Gastrocnemius medialis (tissue), 4 donors: ENCODE measurements at regions of chr17 and their contacts with region 1.

Region 1: GRCh38 chr17:42577532-42578281 is at the start of gene PSMC3IP:
- DNase-seq: peak; percentile 94
- ATAC-seq: peak; percentile 95 to 96
- H3K4me3 ChIP-seq: peak within 1 kb of the TSS; percentile 61 to 94 (median 86)
- H3K27ac ChIP-seq: peak within 1 kb of the TSS; percentile 83 to 98 (median 91)
- H3K4me1 ChIP-seq: peaks cover 12 to 18% of the 10 kb centered on the region in 2 donors
- H3K27me3 ChIP-seq: no peaks in the 10 kb centered on the region
- CTCF ChIP-seq: peak in 2 of 5 experiments; percentile 23 to 30
- POLR2A ChIP-seq: peak; percentile 62 to 65
- total RNA-seq, gene PSMC3IP: 0.46 to 2.7 (median 1.4) TPM

Region 2: DNA sequence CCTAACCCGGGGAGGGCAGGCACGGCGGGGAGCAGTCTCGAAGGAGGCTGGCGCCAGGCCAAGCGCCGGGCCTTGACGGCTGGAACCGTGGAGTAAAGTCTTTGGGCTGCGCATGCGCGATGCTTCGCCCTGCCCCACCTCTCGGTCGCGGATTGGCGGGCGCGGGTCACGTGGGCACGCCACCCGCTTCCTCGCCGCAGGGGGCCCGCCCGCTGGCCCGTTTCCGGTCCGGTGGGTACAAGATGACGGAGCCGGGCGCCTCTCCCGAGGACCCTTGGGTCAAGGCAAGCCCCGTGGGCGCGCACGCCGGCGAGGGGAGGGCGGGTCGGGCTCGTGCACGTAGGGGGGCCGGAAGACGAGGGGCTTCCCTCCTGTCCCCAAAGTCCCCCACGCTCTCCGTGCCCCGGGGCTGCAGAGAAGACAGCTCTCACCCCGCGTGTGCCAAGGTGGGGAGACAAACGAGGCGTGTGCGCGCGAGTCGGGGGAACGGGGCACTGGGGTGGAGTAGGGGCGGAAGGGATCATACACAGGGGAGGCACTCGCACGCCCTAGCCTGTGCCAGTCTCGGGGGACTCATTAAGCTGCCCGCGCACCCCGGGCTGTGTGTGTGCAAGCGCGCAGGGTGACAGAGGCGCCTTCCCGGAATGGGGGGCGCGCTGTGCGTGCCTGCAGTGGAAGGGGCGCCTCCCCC is 10.7 kb before region 1 on chr17 and contains the start of gene MLX:
- in situ Hi-C with region 1: no loop called
- intact Hi-C with region 1: loop called (anchors 1 kb)
- DNase-seq: peak; percentile 91 to 94
- ATAC-seq: peak; percentile 77 to 79
- H3K4me3 ChIP-seq: peak within 1 kb of the TSS; percentile 84 to 92 (median 86)
- H3K27ac ChIP-seq: peak within 1 kb of the TSS; percentile 91 to 97 (median 94)
- H3K4me1 ChIP-seq: peaks cover 27 to 37% of the 10 kb centered on the region in 2 donors
- H3K27me3 ChIP-seq: no peaks in the 10 kb centered on the region
- CTCF ChIP-seq: no peak
- POLR2A ChIP-seq: peak; percentile 34 to 71
- total RNA-seq, gene MLX: 49.7 to 81.9 (median 53.8) TPM

Region 3: GRCh38 chr17:42659079-42659931 is 81.6 kb after region 1 on chr17 and contains the start of gene TUBG2:
- in situ Hi-C with region 1: no loop called
- intact Hi-C with region 1: no loop called
- DNase-seq: peak; percentile 52 to 79
- ATAC-seq: peak; percentile 63 to 83
- H3K4me3 ChIP-seq: peak within 1 kb of the TSS; percentile 58 to 76 (median 72)
- H3K27ac ChIP-seq: peak within 1 kb of the TSS; percentile 62 to 72 (median 67)
- H3K4me1 ChIP-seq: peaks cover 7 to 12% of the 10 kb centered on the region in 2 donors
- H3K27me3 ChIP-seq: no peaks in the 10 kb centered on the region
- CTCF ChIP-seq: no peak
- POLR2A ChIP-seq: peak; percentile 37 to 38
- total RNA-seq, gene TUBG2: 3.9 to 5.2 (median 4.2) TPM

Region 4: GRCh38 chr17:42677008-42677857 is 99.5 kb after region 1 on chr17:
- in situ Hi-C with region 1: loop called (anchors 5 to 25 kb)
- intact Hi-C with region 1: loop called (anchors 1 kb)
- DNase-seq: peak; percentile 100
- ATAC-seq: peak; percentile 60 to 69
- H3K4me3 ChIP-seq: peak overlapping the region; percentile 76 to 99 (median 97)
- H3K27ac ChIP-seq: peak overlapping the region; percentile 93 to 100 (median 98)
- H3K4me1 ChIP-seq: peaks cover 59 to 68% of the 10 kb centered on the region in 2 donors
- H3K27me3 ChIP-seq: no peaks in the 10 kb centered on the region
- CTCF ChIP-seq: no peak
- POLR2A ChIP-seq: no peak

Region 5: DNA sequence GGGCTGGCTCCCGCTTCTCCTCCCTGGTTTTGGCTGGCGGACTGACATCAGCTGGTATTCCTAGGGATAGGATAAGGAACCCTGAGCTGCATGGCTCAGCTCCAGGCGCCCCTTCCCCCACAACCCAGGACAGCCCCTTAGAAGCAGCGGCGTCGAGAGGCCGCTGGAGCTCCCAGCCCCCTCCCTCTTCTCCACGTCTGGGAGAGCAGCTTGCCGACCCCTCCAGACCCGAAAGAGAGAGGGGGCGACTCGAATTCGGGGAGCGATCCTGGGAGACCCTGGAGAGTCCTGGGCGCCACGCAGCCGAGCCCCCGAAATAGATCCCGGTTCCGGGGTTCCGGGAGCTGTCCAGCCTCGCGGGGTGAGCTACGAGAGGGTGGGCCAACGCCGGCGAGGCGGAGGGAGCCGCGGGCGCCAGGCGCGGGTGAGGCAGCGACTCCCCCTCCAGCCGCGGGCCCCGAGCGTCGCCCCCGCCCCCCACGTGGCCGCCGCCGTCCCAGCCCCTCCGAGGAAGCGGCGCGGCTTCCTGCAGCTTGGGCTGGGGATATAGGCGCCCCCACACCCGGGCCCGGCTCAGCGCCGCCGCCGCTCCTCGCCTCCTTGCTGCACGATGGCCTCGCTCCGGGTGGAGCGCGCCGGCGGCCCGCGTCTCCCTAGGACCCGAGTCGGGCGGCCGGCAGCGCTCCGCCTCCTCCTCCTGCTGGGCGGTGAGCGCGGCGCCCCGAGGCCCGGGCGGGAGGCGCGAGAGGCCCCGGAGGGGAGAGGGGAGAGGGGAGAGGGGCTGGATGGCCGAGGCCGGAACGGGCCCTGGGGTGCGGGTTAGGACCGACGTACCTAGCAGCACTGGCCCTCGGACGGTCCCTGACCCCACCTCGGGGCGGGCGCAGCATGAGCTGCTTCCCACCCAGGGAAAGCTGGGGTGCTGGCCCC is 183.2 kb after region 1 on chr17 and contains the start of gene RAMP2:
- in situ Hi-C with region 1: loop called in 2 of 4 experiments (anchors 10 to 25 kb)
- intact Hi-C with region 1: loop called (anchors 2 kb)
- DNase-seq: no peak
- ATAC-seq: peak in 1 of 2 donors; percentile 24
- H3K4me3 ChIP-seq: peak within 1 kb of the TSS; percentile 50 to 66 (median 58)
- H3K27ac ChIP-seq: peak within 1 kb of the TSS; percentile 67 to 78 (median 74)
- H3K4me1 ChIP-seq: peaks cover 3 to 13% of the 10 kb centered on the region in 2 donors
- H3K27me3 ChIP-seq: peaks cover 4 to 26% (median 15%) of the 10 kb centered on the region in 3 donors
- CTCF ChIP-seq: no peak
- POLR2A ChIP-seq: peak in 1 of 2 donors; percentile 41
- total RNA-seq, gene RAMP2: 17.5 to 31.2 (median 20.7) TPM

Region 6: DNA sequence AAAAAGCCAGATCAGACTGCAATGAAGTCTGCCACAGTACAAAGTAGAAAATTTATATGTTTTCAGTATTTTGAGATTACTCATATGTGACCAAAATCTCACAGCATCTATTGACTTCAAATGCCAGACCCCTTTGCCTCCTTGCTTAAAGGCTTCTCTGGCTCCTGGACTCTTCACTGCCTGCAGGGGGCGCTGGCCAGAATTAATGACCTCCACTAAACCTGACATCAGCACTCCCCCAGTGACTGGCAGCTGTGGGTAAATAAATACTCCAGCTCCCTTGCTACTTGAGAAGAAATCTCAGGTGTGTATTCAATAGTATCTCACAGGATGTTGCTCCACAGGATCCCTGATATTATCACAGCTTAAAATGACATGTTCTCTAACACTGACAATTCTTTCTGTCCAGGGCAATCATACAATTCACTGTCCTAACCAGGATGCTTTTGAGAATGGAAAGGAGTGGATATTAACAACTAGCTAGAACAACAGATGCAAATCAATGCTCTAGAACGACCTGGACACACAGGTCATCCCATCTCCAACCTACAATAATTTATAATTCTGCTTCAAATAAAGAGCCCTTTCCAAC is 242.3 kb after region 1 on chr17:
- in situ Hi-C with region 1: no loop called
- intact Hi-C with region 1: loop called (anchors 5 kb)
- DNase-seq: peak in 1 of 2 donors; percentile 33
- ATAC-seq: no peak
- H3K4me3 ChIP-seq: no peak overlapping the region
- H3K27ac ChIP-seq: no peak overlapping the region
- H3K4me1 ChIP-seq: peaks cover 13 to 14% of the 10 kb centered on the region in 2 donors
- H3K27me3 ChIP-seq: no peaks in the 10 kb centered on the region
- CTCF ChIP-seq: peak in 3 of 5 experiments; percentile 41 to 61 (median 42)
- POLR2A ChIP-seq: no peak